ENCODE measurements at regions of chr4 and their contacts with region 1.

Region 1: DNA sequence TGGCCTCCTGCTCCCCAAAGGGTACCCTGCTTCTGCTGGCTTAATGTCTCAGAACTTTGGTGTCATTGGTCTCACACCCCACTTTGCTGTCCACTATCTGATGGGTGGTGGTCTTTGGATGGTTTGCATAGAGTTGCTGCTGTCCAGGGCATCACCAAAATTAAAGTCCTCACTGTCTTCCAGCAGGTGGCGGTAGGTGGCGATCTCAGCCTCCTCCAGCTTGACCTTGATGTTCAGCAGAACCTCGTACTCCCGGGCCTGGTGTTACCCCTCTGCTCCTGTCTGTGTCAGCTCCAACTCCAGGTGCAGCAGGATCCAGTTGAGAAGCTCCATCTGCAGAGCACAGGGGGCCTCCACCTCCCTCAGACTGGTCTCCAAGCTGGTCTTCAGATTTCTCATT is 1169.5 kb upstream of the PABPC4L start:
- DNase-seq: no peak
- ATAC-seq: no peak
- H3K4me3 ChIP-seq: no peak overlapping the region
- H3K4me3 Mint-ChIP-seq: no peak overlapping the region
- H3K27ac ChIP-seq: no peak overlapping the region
- H3K27ac Mint-ChIP-seq: no peak overlapping the region
- H3K4me1 ChIP-seq: no peaks in the 10 kb centered on the region
- H3K4me1 Mint-ChIP-seq: no peaks in the 10 kb centered on the region
- H3K27me3 ChIP-seq: no peaks in the 10 kb centered on the region
- H3K27me3 Mint-ChIP-seq: no peaks in the 10 kb centered on the region

Region 2: DNA sequence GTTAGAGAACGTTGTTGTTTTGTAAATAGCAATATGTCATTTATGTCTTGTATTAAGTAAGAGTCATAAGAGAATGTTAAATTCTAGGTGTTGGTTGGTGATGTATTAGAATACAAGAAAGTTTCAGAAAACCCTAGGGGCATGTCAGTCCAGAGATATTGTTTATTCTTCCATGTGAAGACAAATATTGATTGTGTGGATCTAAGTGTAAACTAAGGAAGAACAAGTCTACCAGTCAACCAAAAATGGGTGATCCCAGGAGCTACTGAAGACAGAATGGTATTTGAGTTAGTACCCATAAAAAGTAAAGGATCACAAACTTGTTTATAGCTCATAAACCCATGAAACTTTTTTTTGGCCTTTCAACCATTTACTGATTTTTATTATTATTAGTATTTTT is 64.6 kb before region 1 on chr4:
- CTCF ChIA-PET with region 1: no interaction called
- POLR2A ChIA-PET with region 1: no interaction called
- intact Hi-C with region 1: no loop called
- DNase-seq: no peak
- ATAC-seq: no peak
- H3K4me3 ChIP-seq: no peak overlapping the region
- H3K4me3 Mint-ChIP-seq: no peak overlapping the region
- H3K27ac ChIP-seq: no peak overlapping the region
- H3K27ac Mint-ChIP-seq: no peak overlapping the region
- H3K4me1 ChIP-seq: no peaks in the 10 kb centered on the region
- H3K4me1 Mint-ChIP-seq: no peaks in the 10 kb centered on the region
- H3K27me3 ChIP-seq: no peaks in the 10 kb centered on the region
- H3K27me3 Mint-ChIP-seq: no peaks in the 10 kb centered on the region

Region 3: DNA sequence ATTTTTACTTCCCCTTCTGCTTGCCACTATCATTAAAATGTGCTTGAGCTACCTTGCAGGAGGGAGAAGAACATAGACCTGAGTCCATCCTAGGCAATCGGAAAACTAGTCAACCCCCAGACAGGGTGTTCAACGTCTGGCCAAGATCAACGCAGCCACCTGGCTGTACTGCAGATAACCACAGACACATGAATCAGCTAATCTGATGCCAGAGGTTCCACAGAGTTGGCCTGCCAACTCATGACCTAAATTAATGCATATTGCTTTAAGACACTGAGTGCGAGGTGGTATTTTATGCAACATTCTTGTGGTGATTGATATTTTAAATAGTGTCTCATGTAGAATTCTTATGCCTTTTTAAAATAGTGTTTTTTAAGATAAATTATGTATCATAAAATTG is 114.2 kb after region 1 on chr4:
- CTCF ChIA-PET with region 1: no interaction called
- POLR2A ChIA-PET with region 1: no interaction called
- intact Hi-C with region 1: no loop called
- DNase-seq: no peak
- ATAC-seq: no peak
- H3K4me3 ChIP-seq: no peak overlapping the region
- H3K4me3 Mint-ChIP-seq: no peak overlapping the region
- H3K27ac ChIP-seq: no peak overlapping the region
- H3K27ac Mint-ChIP-seq: no peak overlapping the region
- H3K4me1 ChIP-seq: no peaks in the 10 kb centered on the region
- H3K4me1 Mint-ChIP-seq: no peaks in the 10 kb centered on the region
- H3K27me3 ChIP-seq: no peaks in the 10 kb centered on the region
- H3K27me3 Mint-ChIP-seq: no peaks in the 10 kb centered on the region

Region 4: DNA sequence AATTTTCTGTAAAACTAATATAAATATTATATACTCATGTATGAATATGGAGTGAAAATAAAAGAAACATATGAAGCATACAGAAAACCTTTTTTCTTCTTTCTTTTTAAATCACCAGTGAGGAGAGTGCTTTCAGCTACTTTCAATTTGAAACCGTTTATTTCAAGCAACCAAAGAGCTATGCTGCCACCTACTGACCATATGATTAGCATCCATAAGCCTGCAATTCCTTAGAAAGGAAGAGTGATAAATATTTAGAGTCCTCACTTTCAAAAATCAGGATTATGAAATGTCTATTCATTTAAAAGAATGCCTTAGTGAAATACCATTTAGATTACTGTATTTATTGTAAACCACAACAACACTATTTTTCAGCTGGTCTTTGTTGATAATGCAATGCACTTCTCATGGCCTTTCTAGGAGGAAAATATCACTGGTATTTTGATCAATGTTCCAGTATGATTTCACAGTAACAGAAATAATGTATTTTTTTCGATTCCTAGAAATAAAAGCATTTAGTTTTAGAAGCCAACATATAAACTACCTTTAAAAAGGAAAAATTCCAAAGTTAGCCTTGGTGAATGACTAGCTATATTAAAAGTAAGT is 1493.5 kb after region 1 on chr4:
- CTCF ChIA-PET with region 1: no interaction called
- POLR2A ChIA-PET with region 1: no interaction called
- intact Hi-C with region 1: loop called in 1 of 2 experiments (anchors 10 kb)
- DNase-seq: peak in 4 of 9 donors; percentile 1 to 23 (median 7)
- ATAC-seq: no peak
- H3K4me3 ChIP-seq: no peak overlapping the region
- H3K4me3 Mint-ChIP-seq: no peak overlapping the region
- H3K27ac ChIP-seq: no peak overlapping the region
- H3K27ac Mint-ChIP-seq: no peak overlapping the region
- H3K4me1 ChIP-seq: no peaks in the 10 kb centered on the region
- H3K4me1 Mint-ChIP-seq: peaks cover 0 to 6% (median 0%) of the 10 kb centered on the region in 7 donors
- H3K27me3 ChIP-seq: no peaks in the 10 kb centered on the region
- H3K27me3 Mint-ChIP-seq: no peaks in the 10 kb centered on the region

Measured in naive thymus-derived CD4-positive, alpha-beta T cell (primary cell).